ENCODE measurements at regions of chr1 and their contacts with region 1.

Region 1: DNA sequence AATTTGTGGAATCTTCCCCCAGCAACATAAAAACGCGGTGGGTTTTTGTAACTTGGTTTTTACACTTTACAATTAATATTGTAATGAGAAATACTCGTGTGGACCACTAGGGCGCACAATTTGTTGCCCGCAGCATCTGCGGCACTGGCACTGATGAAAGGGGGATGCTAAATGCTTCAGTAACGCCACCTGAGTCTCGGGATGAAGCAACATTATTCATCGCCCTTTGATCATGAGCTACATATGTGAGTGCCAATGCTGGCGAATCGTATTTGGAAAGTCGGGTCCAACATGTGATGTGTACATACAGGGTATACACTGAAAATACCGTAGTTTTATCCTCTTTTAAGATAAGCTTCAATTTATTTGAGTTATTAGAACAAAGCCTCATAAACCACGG is 34.2 kb upstream of the COX20 start:
- DNase-seq: peak; percentile 80
- ATAC-seq: peak; percentile 94
- H3K4me3 ChIP-seq: no peak overlapping the region
- H3K4me3 Mint-ChIP-seq: peak overlapping the region; percentile 68
- H3K27ac ChIP-seq: no peak overlapping the region
- H3K27ac Mint-ChIP-seq: peak overlapping the region; percentile 38
- H3K4me1 ChIP-seq: peaks cover 6 to 8% of the 10 kb centered on the region in 2 donors
- H3K4me1 Mint-ChIP-seq: peaks cover 2% of the 10 kb centered on the region
- H3K27me3 ChIP-seq: no peaks in the 10 kb centered on the region
- H3K27me3 Mint-ChIP-seq: peaks cover 10% of the 10 kb centered on the region
- CTCF ChIP-seq: peak; percentile 81

Region 2: DNA sequence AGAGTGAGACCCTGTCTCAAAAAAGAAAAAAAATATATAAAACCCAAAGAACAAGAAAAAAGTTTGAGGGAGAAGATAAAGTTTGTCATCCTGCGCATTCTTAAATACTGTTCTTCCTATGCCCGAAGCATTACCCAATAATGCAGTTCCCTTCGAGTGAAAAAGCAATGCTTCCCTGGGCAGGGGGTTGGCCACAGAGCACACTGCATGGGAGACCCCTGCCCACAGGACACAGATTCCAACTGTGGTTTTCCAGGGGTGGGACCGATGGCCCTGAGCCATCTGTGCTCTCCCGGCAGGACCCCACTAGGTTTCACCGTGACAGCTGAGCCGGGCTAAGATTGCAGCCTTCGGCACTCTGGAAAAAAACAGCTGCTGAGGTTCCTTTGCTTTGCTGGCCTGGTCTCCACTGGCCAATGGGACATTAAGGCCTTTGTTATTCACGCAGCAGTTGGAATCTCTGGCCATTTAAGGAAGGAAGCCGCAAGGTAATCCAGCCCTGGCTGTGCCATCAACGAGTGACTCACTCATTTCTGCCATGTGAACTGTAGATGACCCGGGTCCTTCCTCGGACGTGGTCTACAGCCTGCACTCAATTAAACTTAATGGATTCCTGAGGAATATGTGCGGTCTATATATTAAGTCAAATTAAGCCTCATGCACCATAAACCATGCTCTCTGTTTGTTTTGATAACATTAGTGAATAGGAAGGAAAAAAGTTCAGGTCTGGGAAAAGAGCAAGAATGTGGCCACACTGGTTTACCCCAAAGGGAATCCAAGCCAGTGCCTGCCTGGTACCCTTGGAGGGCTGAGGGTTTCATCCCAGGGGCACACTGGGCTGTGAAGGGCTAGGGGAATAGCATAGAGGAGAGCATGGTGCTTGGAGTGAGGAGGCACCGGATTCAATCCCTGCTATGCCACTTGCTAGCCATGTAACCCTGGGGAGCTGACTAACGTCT is 587.0 kb before region 1 on chr1:
- CTCF ChIA-PET with region 1: no interaction called
- POLR2A ChIA-PET with region 1: no interaction called
- intact Hi-C with region 1: no loop called
- DNase-seq: no peak
- ATAC-seq: no peak
- H3K4me3 ChIP-seq: no peak overlapping the region
- H3K4me3 Mint-ChIP-seq: no peak overlapping the region
- H3K27ac ChIP-seq: no peak overlapping the region
- H3K27ac Mint-ChIP-seq: no peak overlapping the region
- H3K4me1 ChIP-seq: peaks cover 6 to 8% of the 10 kb centered on the region in 2 donors
- H3K4me1 Mint-ChIP-seq: peaks cover 10% of the 10 kb centered on the region
- H3K27me3 ChIP-seq: peaks cover 0 to 3% (median 0%) of the 10 kb centered on the region in 4 experiments
- H3K27me3 Mint-ChIP-seq: no peaks in the 10 kb centered on the region
- CTCF ChIP-seq: no peak

Region 3: GRCh38 chr1:244599937-244600350 is 201.3 kb before region 1 on chr1:
- CTCF ChIA-PET with region 1: interaction called, 278 read pairs
- POLR2A ChIA-PET with region 1: no interaction called
- intact Hi-C with region 1: loop called (anchors 1 kb)
- DNase-seq: peak; percentile 29
- ATAC-seq: peak; percentile 89
- H3K4me3 ChIP-seq: no peak overlapping the region
- H3K4me3 Mint-ChIP-seq: peak overlapping the region; percentile 1
- H3K27ac ChIP-seq: no peak overlapping the region
- H3K27ac Mint-ChIP-seq: peak overlapping the region; percentile 76
- H3K4me1 ChIP-seq: no peaks in the 10 kb centered on the region
- H3K4me1 Mint-ChIP-seq: peaks cover 9% of the 10 kb centered on the region
- H3K27me3 ChIP-seq: no peaks in the 10 kb centered on the region
- H3K27me3 Mint-ChIP-seq: no peaks in the 10 kb centered on the region
- CTCF ChIP-seq: no peak

Region 4: DNA sequence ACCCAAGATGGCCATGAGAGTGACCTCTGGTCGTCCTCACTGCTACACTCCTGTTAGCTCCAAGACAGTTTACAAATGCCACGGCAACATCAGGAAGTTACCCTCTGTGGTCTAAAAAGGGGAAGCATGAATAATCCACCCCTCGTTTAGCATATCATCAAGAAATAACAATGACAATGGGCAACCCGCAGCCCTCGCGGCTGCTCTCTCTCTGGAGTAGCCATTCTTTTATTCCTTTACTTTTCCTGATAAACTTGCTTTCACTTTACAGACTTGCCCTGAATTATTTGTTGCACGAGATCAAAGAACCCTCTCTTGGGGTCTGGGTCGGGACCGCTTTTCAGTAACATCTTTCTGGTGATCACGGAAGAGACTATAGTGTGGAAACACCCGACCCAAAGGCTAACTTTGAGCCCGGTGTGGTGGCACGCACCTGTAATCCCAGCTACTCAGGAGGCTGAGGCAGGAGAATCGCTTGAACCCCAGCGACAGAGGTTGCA is 14.4 kb after region 1 on chr1:
- CTCF ChIA-PET with region 1: interaction called, 24 read pairs
- POLR2A ChIA-PET with region 1: no interaction called
- intact Hi-C with region 1: no loop called
- DNase-seq: peak; percentile 76
- ATAC-seq: peak; percentile 69
- H3K4me3 ChIP-seq: peak overlapping the region; percentile 47 to 68 (median 55)
- H3K4me3 Mint-ChIP-seq: peak overlapping the region; percentile 82
- H3K27ac ChIP-seq: peak overlapping the region; percentile 10 to 16
- H3K27ac Mint-ChIP-seq: peak overlapping the region; percentile 73
- H3K4me1 ChIP-seq: peaks cover 20 to 28% of the 10 kb centered on the region in 2 donors
- H3K4me1 Mint-ChIP-seq: peaks cover 27% of the 10 kb centered on the region
- H3K27me3 ChIP-seq: no peaks in the 10 kb centered on the region
- H3K27me3 Mint-ChIP-seq: no peaks in the 10 kb centered on the region
- CTCF ChIP-seq: no peak

Region 5: DNA sequence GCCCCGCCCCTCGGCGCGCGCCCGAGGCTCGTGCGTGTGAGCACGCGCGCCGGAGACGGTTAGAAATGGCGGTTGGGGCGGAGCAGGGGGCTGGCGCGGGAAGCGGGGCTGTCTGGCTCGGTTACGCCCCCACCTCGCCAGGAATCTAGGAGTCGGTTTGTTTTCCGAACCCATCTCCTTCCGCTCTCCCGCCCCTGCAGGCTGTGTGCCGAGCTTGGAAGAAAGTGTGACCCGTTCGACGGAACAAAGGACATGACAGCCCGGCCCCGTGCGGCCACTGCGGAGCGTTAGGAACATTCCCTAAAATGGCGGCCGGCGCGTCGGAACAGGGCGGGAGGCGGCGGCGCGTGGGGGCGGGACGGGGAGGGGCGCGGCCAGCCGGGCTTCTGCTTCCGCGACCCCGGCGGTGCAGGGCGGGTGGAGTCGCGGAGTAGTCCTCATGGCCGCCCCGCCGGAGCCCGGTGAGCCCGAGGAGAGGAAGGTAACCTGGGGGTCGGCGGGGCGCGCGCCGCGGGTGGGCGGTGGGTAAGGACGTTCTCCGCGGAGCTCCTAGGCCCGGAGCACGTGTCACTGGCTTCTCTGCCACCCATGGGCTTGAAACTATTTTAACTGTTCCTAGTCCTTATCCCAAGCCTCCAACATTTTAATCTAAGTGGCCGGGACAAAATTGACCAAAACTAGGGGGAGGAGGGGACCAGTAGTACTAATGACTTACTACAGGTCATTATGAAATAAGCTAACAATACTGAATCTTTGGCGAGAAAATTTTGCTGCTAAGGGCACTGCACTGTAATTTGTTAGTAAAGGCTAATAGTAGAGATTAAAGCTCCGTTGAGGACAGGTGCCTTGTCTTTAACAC is 34.3 kb after region 1 on chr1 and contains the start of gene COX20:
- CTCF ChIA-PET with region 1: interaction called, 20 read pairs
- POLR2A ChIA-PET with region 1: interaction called, 8 read pairs
- intact Hi-C with region 1: loop called (anchors 1 kb)
- DNase-seq: peak; percentile 97
- ATAC-seq: peak; percentile 69
- H3K4me3 ChIP-seq: peak within 1 kb of the TSS; percentile 89 to 98 (median 94)
- H3K4me3 Mint-ChIP-seq: peak within 1 kb of the TSS; percentile 100
- H3K27ac ChIP-seq: peak within 1 kb of the TSS; percentile 97
- H3K27ac Mint-ChIP-seq: peak within 1 kb of the TSS; percentile 100
- H3K4me1 ChIP-seq: peaks cover 21 to 27% of the 10 kb centered on the region in 2 donors
- H3K4me1 Mint-ChIP-seq: peaks cover 59% of the 10 kb centered on the region
- H3K27me3 ChIP-seq: no peaks in the 10 kb centered on the region
- H3K27me3 Mint-ChIP-seq: no peaks in the 10 kb centered on the region
- CTCF ChIP-seq: peak; percentile 13
- total RNA-seq, gene COX20: 35.7 and 37.7 TPM in 2 replicates

Region 6: GRCh38 chr1:244854865-244855578 is 53.8 kb after region 1 on chr1:
- CTCF ChIA-PET with region 1: interaction called, 12 read pairs
- POLR2A ChIA-PET with region 1: no interaction called
- intact Hi-C with region 1: no loop called
- DNase-seq: no peak
- ATAC-seq: no peak
- H3K4me3 ChIP-seq: no peak overlapping the region
- H3K4me3 Mint-ChIP-seq: peak overlapping the region; percentile 5
- H3K27ac ChIP-seq: peak overlapping the region in 1 of 2 donors; percentile 52
- H3K27ac Mint-ChIP-seq: peak overlapping the region; percentile 64
- H3K4me1 ChIP-seq: peaks cover 22 to 34% of the 10 kb centered on the region in 2 donors
- H3K4me1 Mint-ChIP-seq: peaks cover 50% of the 10 kb centered on the region
- H3K27me3 ChIP-seq: no peaks in the 10 kb centered on the region
- H3K27me3 Mint-ChIP-seq: no peaks in the 10 kb centered on the region
- CTCF ChIP-seq: no peak

Region 7: DNA sequence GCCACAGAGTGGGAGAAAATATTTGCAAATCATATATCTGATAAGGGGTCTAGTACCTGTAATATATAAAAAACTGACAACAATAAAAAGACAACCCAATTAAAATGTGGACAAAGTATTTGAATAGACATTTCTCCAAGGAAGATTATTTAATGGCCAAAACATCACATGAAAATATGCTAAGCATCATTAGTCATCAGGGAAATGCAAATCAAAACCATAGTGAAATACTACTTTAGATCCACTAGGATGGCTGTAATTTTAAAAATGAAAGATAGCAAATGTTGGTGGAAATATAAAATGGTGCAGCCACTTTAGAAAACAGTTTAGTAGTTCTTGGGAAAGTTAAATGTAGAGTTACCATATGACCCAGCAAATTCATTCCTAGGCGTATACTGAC is 234.9 kb after region 1 on chr1:
- CTCF ChIA-PET with region 1: interaction called, 265 read pairs
- POLR2A ChIA-PET with region 1: no interaction called
- intact Hi-C with region 1: no loop called
- DNase-seq: no peak
- ATAC-seq: no peak
- H3K4me3 ChIP-seq: no peak overlapping the region
- H3K4me3 Mint-ChIP-seq: no peak overlapping the region
- H3K27ac ChIP-seq: no peak overlapping the region
- H3K27ac Mint-ChIP-seq: no peak overlapping the region
- H3K4me1 ChIP-seq: no peaks in the 10 kb centered on the region
- H3K4me1 Mint-ChIP-seq: no peaks in the 10 kb centered on the region
- H3K27me3 ChIP-seq: no peaks in the 10 kb centered on the region
- H3K27me3 Mint-ChIP-seq: no peaks in the 10 kb centered on the region
- CTCF ChIP-seq: no peak

Region 8: GRCh38 chr1:245180496-245181157 is 379.4 kb after region 1 on chr1:
- CTCF ChIA-PET with region 1: no interaction called
- POLR2A ChIA-PET with region 1: no interaction called
- intact Hi-C with region 1: no loop called
- DNase-seq: no peak
- ATAC-seq: no peak
- H3K4me3 ChIP-seq: no peak overlapping the region
- H3K4me3 Mint-ChIP-seq: no peak overlapping the region
- H3K27ac ChIP-seq: no peak overlapping the region
- H3K27ac Mint-ChIP-seq: no peak overlapping the region
- H3K4me1 ChIP-seq: no peaks in the 10 kb centered on the region
- H3K4me1 Mint-ChIP-seq: no peaks in the 10 kb centered on the region
- H3K27me3 ChIP-seq: no peaks in the 10 kb centered on the region
- H3K27me3 Mint-ChIP-seq: peaks cover 14% of the 10 kb centered on the region
- CTCF ChIP-seq: no peak

Measured in B cell (primary cell).